ENCODE measurements at regions of chr4 and their contacts with region 1.

Region 1: GRCh38 chr4:21790438-21791029 is 158.0 kb downstream of the KCNIP4 start:
- DNase-seq: no peak
- ATAC-seq: no peak
- H3K4me3 Mint-ChIP-seq: no peak overlapping the region
- H3K27ac Mint-ChIP-seq: no peak overlapping the region
- H3K4me1 Mint-ChIP-seq: peaks cover 2% of the 10 kb centered on the region
- H3K27me3 Mint-ChIP-seq: no peaks in the 10 kb centered on the region
- CTCF ChIP-seq: peak; percentile 66

Region 2: GRCh38 chr4:21802406-21802805 is 11.9 kb after region 1 on chr4:
- CTCF ChIA-PET with region 1: interaction called, 23 read pairs
- POLR2A ChIA-PET with region 1: no interaction called
- intact Hi-C with region 1: no loop called
- DNase-seq: no peak
- ATAC-seq: no peak
- H3K4me3 Mint-ChIP-seq: no peak overlapping the region
- H3K27ac Mint-ChIP-seq: no peak overlapping the region
- H3K4me1 Mint-ChIP-seq: no peaks in the 10 kb centered on the region
- H3K27me3 Mint-ChIP-seq: peaks cover 2% of the 10 kb centered on the region
- CTCF ChIP-seq: no peak

Region 3: GRCh38 chr4:22356987-22357596 is 566.6 kb after region 1 on chr4:
- CTCF ChIA-PET with region 1: interaction called, 12 read pairs
- POLR2A ChIA-PET with region 1: no interaction called
- intact Hi-C with region 1: no loop called
- DNase-seq: no peak
- ATAC-seq: peak; percentile 71
- H3K4me3 Mint-ChIP-seq: no peak overlapping the region
- H3K27ac Mint-ChIP-seq: no peak overlapping the region
- H3K4me1 Mint-ChIP-seq: no peaks in the 10 kb centered on the region
- H3K27me3 Mint-ChIP-seq: no peaks in the 10 kb centered on the region
- CTCF ChIP-seq: no peak

Region 4: GRCh38 chr4:22389240-22389870 is 598.8 kb after region 1 on chr4:
- CTCF ChIA-PET with region 1: interaction called, 118 read pairs
- POLR2A ChIA-PET with region 1: no interaction called
- intact Hi-C with region 1: loop called (anchors 5 kb)
- DNase-seq: peak; percentile 59
- ATAC-seq: peak; percentile 74
- H3K4me3 Mint-ChIP-seq: no peak overlapping the region
- H3K27ac Mint-ChIP-seq: no peak overlapping the region
- H3K4me1 Mint-ChIP-seq: peaks cover 12% of the 10 kb centered on the region
- H3K27me3 Mint-ChIP-seq: no peaks in the 10 kb centered on the region
- CTCF ChIP-seq: peak; percentile 67

Region 5: DNA sequence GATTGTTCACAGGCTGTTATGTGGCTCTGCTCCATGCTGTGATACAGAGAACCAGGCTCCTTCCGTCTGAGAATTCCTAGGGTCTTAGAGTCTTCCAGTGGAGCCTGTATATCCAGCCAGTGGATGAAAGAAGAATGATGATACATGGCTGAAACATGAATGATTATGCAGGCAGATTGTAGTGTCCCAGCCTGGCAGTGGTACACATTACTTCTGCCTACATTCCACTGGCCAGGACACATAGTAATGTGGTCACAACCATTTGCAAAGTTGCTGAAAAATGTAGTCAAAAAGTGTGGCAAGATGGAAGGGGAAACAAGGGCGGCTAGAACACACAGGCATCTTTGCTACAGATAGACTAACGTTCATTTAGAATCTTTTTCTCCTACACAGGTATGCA is 897.7 kb after region 1 on chr4:
- CTCF ChIA-PET with region 1: interaction called, 7 read pairs
- POLR2A ChIA-PET with region 1: no interaction called
- intact Hi-C with region 1: loop called (anchors 5 kb)
- DNase-seq: no peak
- ATAC-seq: no peak
- H3K4me3 Mint-ChIP-seq: no peak overlapping the region
- H3K27ac Mint-ChIP-seq: no peak overlapping the region
- H3K4me1 Mint-ChIP-seq: peaks cover 11% of the 10 kb centered on the region
- H3K27me3 Mint-ChIP-seq: no peaks in the 10 kb centered on the region
- CTCF ChIP-seq: no peak